ENCODE measurements at regions of chr11 and their contacts with region 1.

Region 1: GRCh38 chr11:66976048-66976467 is 954 bp downstream of the C11orf86 start:
- DNase-seq: peak; percentile 35
- ATAC-seq: peak; percentile 69
- H3K4me3 ChIP-seq: peak overlapping the region in 1 of 3 experiments; percentile 36; a peak in 1 of 6 replicates
- H3K27ac ChIP-seq: no peak overlapping the region
- H3K4me1 ChIP-seq: peaks cover 53% of the 10 kb centered on the region
- H3K27me3 ChIP-seq: no peaks in the 10 kb centered on the region
- CTCF ChIP-seq: peak; percentile 94
- EP300 ChIP-seq: no peak
- POLR2A ChIP-seq: no peak
- RAD21 ChIP-seq: peak; percentile 91

Region 2: GRCh38 chr11:66694732-66695207 is 281.3 kb before region 1 on chr11:
- CTCF ChIA-PET with region 1: no interaction called
- POLR2A ChIA-PET with region 1: no interaction called
- in situ Hi-C with region 1: loop called (anchors 5 kb)
- intact Hi-C with region 1: loop called (anchors 2 kb)
- DNase-seq: peak; percentile 96
- ATAC-seq: peak; percentile 97
- H3K4me3 ChIP-seq: no peak overlapping the region
- H3K27ac ChIP-seq: no peak overlapping the region
- H3K4me1 ChIP-seq: no peaks in the 10 kb centered on the region
- H3K27me3 ChIP-seq: no peaks in the 10 kb centered on the region
- CTCF ChIP-seq: peak; percentile 97
- EP300 ChIP-seq: no peak
- POLR2A ChIP-seq: no peak
- RAD21 ChIP-seq: peak; percentile 97

Region 3: GRCh38 chr11:66800720-66801428 is 175.2 kb before region 1 on chr11:
- CTCF ChIA-PET with region 1: no interaction called
- POLR2A ChIA-PET with region 1: no interaction called
- in situ Hi-C with region 1: no loop called
- intact Hi-C with region 1: no loop called
- DNase-seq: no peak
- ATAC-seq: no peak
- H3K4me3 ChIP-seq: no peak overlapping the region
- H3K27ac ChIP-seq: no peak overlapping the region
- H3K4me1 ChIP-seq: no peaks in the 10 kb centered on the region
- H3K27me3 ChIP-seq: no peaks in the 10 kb centered on the region
- CTCF ChIP-seq: no peak
- EP300 ChIP-seq: no peak
- POLR2A ChIP-seq: no peak
- RAD21 ChIP-seq: no peak

Region 4: DNA sequence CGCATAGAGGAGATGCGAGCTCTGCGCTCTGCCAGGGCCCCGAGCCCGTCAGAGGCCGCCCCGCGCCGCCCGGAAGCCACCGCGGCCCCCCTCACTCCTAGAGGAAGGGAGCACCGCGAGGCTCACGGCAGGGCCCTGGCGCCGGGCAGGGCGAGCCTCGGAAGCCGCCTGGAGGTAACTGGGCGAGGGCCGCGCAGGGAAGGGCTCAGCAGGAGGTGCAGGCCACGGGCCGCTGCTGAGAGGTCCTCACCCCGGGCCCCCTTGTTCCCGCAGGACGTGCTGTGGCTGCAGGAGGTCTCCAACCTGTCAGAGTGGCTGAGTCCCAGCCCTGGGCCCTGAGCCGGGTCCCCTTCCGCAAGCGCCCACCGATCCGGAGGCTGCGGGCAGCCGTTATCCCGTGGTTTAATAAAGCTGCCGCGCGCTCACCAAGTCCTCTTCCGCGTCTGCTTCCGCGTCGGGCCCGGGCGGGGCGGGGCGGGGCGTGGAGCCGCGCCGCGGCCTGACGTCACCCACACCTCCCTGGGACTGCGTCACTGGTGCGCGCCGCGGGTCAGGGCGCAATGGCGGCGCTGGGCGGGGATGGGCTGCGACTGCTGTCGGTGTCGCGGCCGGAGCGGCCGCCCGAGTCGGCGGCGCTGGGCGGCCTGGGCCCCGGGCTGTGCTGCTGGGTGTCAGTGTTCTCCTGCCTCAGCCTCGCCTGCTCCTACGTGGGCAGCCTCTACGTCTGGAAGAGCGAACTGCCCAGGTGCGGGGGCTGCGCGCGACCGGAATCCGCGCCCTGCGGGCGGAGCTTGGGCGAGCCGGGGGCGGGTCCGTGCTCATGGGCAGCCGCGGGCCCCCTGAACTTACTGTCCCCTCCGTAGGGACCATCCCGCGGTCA is 132.9 kb before region 1 on chr11 and contains the start of gene RCE1:
- CTCF ChIA-PET with region 1: no interaction called
- POLR2A ChIA-PET with region 1: interaction called, 7 read pairs
- in situ Hi-C with region 1: loop called (anchors 10 kb)
- intact Hi-C with region 1: loop called (anchors 5 kb)
- DNase-seq: peak; percentile 71
- ATAC-seq: peak; percentile 78
- H3K4me3 ChIP-seq: peak within 1 kb of the TSS; percentile 87 to 99 (median 87)
- H3K27ac ChIP-seq: peak within 1 kb of the TSS; percentile 82
- H3K4me1 ChIP-seq: peaks cover 28% of the 10 kb centered on the region
- H3K27me3 ChIP-seq: no peaks in the 10 kb centered on the region; a peak in 1 of 5 replicates
- CTCF ChIP-seq: no peak
- EP300 ChIP-seq: peak; percentile 21 to 47; a peak in 1 of 4 replicates
- POLR2A ChIP-seq: peak; percentile 87 to 92
- RAD21 ChIP-seq: peak; percentile 40; the same call in 1 of the 2 replicates
- total RNA-seq, gene RCE1: 8.0 and 22.2 TPM in 2 replicates

Region 5: GRCh38 chr11:66883016-66883968 is 92.8 kb before region 1 on chr11:
- CTCF ChIA-PET with region 1: interaction called, 5 read pairs
- POLR2A ChIA-PET with region 1: no interaction called
- in situ Hi-C with region 1: no loop called
- intact Hi-C with region 1: loop called (anchors 2 kb)
- DNase-seq: peak; percentile 45
- ATAC-seq: peak; percentile 76
- H3K4me3 ChIP-seq: no peak overlapping the region
- H3K27ac ChIP-seq: no peak overlapping the region
- H3K4me1 ChIP-seq: peaks cover 29% of the 10 kb centered on the region
- H3K27me3 ChIP-seq: no peaks in the 10 kb centered on the region
- CTCF ChIP-seq: peak; percentile 73
- EP300 ChIP-seq: no peak
- POLR2A ChIP-seq: no peak
- RAD21 ChIP-seq: peak; percentile 67

Region 6: DNA sequence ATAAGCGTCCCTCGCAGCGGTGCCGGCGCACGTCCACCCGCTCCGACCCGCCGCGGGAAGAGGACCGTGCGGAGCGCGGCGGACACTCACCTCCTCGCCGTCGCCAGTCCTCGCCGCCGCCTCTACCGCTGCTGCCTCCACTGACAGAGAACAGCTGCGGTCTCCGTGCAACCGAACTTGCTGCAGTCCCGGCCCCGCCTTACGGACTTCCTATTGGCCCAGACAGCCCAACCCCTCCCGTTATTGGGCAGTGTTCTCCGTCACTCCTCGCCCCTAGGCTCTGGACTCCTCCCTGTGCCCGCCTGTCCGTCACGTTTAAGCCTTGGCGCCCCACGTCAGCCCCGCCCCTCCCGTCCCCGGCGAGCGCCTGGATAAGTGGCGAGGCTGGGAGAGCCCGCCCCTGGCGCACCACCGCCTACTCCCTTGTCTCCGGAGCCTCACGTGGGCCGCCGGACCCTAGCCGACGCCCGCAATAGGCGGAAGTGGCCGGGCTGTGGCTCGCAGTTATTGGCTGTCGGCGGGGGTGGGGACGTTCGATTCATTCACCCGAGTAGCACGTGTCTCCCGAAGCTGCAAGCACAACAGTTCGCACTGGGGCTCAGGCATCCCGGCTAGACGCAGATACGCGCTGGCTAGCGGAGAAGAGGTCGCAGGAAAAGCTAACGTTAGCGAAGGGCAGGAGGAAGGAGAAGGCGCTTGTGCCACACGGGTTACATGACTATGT is 17.7 kb before region 1 on chr11 and contains the start of gene PC:
- CTCF ChIA-PET with region 1: no interaction called
- POLR2A ChIA-PET with region 1: interaction called, 30 read pairs
- in situ Hi-C with region 1: no loop called
- intact Hi-C with region 1: no loop called
- DNase-seq: peak; percentile 98
- ATAC-seq: peak; percentile 95
- H3K4me3 ChIP-seq: peak within 1 kb of the TSS; percentile 63 to 84 (median 82)
- H3K27ac ChIP-seq: peak within 1 kb of the TSS; percentile 69
- H3K4me1 ChIP-seq: peaks cover 29% of the 10 kb centered on the region
- H3K27me3 ChIP-seq: no peaks in the 10 kb centered on the region
- CTCF ChIP-seq: peak; percentile 4; the same call in 1 of the 2 replicates
- EP300 ChIP-seq: peak in 1 of 2 experiments; percentile 27; a peak in 1 of 4 replicates
- POLR2A ChIP-seq: peak; percentile 30 to 71; a peak in 3 of 4 replicates
- RAD21 ChIP-seq: no peak
- total RNA-seq, gene PC: 32.6 and 39.0 TPM in 2 replicates

Region 7: GRCh38 chr11:66996609-66997405 is 20.7 kb after region 1 on chr11:
- CTCF ChIA-PET with region 1: no interaction called
- POLR2A ChIA-PET with region 1: no interaction called
- in situ Hi-C with region 1: no loop called
- intact Hi-C with region 1: no loop called
- DNase-seq: peak; percentile 93
- ATAC-seq: peak; percentile 97
- H3K4me3 ChIP-seq: no peak overlapping the region
- H3K27ac ChIP-seq: no peak overlapping the region
- H3K4me1 ChIP-seq: peaks cover 26% of the 10 kb centered on the region
- H3K27me3 ChIP-seq: no peaks in the 10 kb centered on the region
- CTCF ChIP-seq: 0 out of 2 replicates have a peak, but pooled peaks have one; percentile 6
- EP300 ChIP-seq: peak in 1 of 2 experiments; percentile 47; a peak in 1 of 4 replicates
- POLR2A ChIP-seq: no peak
- RAD21 ChIP-seq: no peak